ENCODE measurements at regions of chr1 and their contacts with region 1.

Region 1: DNA sequence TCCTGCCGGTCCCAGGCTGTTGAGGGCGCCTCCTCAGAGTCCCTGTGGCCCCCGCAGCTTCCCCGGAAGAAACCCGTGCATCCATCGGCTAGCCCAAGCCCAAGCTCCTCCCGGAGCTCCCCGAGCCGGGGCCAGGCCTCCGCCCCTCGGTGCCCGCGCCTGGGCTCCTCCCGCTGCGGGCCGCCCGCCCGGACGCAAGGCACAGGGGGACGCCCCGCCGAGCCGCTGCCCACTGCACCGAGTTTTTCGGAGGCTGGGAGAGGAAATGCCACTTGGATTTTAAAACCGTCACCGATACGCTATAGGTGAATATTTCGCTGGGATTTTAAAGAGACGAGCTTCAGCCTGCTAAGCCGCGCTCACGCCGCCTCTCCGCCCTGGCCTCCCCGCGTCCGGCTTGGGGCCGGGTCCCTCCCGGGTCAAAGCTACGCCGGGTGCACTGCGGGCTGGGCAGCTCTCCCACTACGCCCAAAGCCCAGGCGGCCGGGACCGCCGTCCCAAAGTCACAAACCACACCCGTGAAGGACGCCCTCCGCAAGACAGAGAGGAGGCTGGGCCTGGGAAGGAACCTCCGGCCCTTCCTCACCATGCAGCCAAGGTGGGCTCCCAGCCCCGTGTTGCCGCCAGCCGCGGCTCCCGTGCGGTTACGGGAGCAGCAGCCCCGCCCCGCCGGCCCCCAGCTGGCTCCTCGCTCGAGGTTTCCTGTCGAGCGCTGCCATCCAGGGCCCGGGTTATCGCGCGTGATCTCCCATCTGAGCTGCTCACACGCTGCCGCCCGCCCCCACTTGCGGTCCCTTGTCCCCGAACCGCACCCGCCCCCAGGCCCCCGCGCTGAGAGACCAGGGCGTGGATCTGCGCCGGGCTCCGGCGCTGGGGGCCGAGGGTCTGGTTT is 63.2 kb downstream of the CD247 start:
- DNase-seq: peak; percentile 78 to 89 (median 83)
- H3K4me3 ChIP-seq: peak overlapping the region; percentile 82
- H3K4me3 Mint-ChIP-seq: peak overlapping the region; percentile 72 to 91 (median 86)
- H3K27ac ChIP-seq: peak overlapping the region; percentile 66
- H3K27ac Mint-ChIP-seq: peak overlapping the region; percentile 48 to 94 (median 82)
- H3K4me1 ChIP-seq: peaks cover 73% of the 10 kb centered on the region
- H3K4me1 Mint-ChIP-seq: peaks cover 56 to 81% (median 69%) of the 10 kb centered on the region in 3 donors
- H3K27me3 ChIP-seq: no peaks in the 10 kb centered on the region
- H3K27me3 Mint-ChIP-seq: no peaks in the 10 kb centered on the region

Region 2: GRCh38 chr1:167401260-167401873 is 53.8 kb before region 1 on chr1:
- CTCF ChIA-PET with region 1: interaction called, 12 read pairs
- POLR2A ChIA-PET with region 1: interaction called, 4 read pairs
- DNase-seq: peak; percentile 30 to 68 (median 41)
- H3K4me3 ChIP-seq: no peak overlapping the region
- H3K4me3 Mint-ChIP-seq: no peak overlapping the region
- H3K27ac ChIP-seq: no peak overlapping the region
- H3K27ac Mint-ChIP-seq: peak overlapping the region in 3 of 8 donors; percentile 9 to 32 (median 13)
- H3K4me1 ChIP-seq: no peaks in the 10 kb centered on the region
- H3K4me1 Mint-ChIP-seq: peaks cover 0 to 4% (median 3%) of the 10 kb centered on the region in 3 donors
- H3K27me3 ChIP-seq: no peaks in the 10 kb centered on the region
- H3K27me3 Mint-ChIP-seq: no peaks in the 10 kb centered on the region

Region 3: GRCh38 chr1:167467126-167467710 is 12.1 kb after region 1 on chr1:
- CTCF ChIA-PET with region 1: interaction called, 20 read pairs
- POLR2A ChIA-PET with region 1: interaction called, 10 read pairs
- DNase-seq: no peak
- H3K4me3 ChIP-seq: no peak overlapping the region
- H3K4me3 Mint-ChIP-seq: no peak overlapping the region
- H3K27ac ChIP-seq: no peak overlapping the region
- H3K27ac Mint-ChIP-seq: peak overlapping the region in 5 of 8 donors; percentile 34 to 70 (median 64)
- H3K4me1 ChIP-seq: peaks cover 88% of the 10 kb centered on the region
- H3K4me1 Mint-ChIP-seq: peaks cover 55 to 89% (median 76%) of the 10 kb centered on the region in 3 donors
- H3K27me3 ChIP-seq: no peaks in the 10 kb centered on the region
- H3K27me3 Mint-ChIP-seq: no peaks in the 10 kb centered on the region

Measured in CD8-positive, alpha-beta memory T cell (primary cell).